Posterior vena cava (tissue), 2 donors: ENCODE measurements at regions of chrX and their contacts with region 1.

Region 1: GRCh38 chrX:132219343-132219768 is at the start of gene RAP2C:
- DNase-seq: peak; percentile 86
- total RNA-seq, gene RAP2C: 21.1 to 25.8 TPM

Region 2: DNA sequence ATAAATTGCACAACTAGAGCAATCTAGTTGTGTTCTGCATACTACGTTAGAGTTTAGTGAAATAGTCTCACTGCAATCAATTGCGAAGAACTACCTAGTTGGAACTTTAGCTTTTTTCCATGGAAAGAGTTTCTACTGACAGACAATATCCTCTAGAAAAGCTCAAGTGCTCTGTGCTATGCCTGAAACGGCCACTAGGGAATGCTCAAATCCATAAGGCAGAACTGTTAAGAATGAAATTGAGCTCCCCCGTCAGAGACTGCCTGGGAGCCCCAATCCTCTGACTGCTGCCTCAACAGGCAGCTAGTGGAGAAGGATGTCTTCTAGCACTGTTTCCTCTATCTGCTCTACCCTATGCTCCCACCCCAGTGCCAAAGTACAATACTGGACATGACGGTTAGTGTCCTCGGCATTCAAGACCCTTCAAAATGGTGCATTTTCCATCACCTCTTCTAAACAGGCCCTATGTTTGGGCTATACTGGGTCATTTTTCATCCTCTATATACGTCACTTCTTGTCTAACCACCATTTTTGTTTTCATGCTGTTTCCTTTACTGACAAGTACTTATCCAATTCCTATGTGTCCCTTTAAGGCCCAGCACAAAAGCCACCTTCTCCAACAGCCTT is 126.8 kb before region 1 on chrX:
- intact Hi-C with region 1: loop called in 1 of 2 experiments (anchors 10 kb)
- DNase-seq: no peak

Region 3: DNA sequence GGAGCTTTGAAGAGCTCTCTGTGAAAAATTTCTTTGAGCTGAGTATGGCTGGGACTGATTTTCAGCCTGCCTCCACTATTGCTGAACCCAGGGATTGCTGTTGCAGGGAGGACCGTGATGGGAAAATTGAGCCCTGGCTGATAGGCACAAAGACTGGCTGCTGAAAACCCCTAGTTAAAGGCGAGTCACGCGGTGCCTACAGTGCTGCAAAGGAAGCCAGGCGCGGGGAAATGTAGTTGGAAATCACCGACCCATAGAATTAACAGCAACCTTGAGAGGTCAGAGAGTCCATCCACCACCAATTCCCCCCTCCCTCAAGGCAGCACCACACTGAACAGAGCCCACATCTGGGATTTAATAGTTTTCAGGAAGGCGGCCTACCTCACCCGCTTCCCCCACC is 117.6 kb before region 1 on chrX:
- intact Hi-C with region 1: loop called (anchors 10 kb)
- DNase-seq: no peak

Region 4: DNA sequence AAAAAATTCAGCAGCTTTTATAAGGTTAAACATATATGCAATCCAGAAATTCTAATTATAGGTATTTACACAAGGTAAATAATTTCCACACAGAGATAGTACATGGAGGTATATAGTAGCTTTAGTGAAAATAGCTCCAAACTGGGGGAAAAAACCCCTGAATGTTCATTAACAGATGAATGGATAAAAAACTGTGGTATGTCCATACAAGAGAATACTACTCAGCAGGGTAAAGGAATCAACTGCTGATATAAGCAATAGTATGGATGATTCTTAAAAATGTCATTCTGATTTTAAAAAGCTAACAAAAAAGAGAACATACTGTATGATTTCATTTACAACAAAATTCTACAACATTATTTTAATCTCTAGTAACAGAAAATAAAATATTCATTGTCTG is 54.4 kb before region 1 on chrX:
- intact Hi-C with region 1: no loop called
- DNase-seq: no peak

Region 5: GRCh38 chrX:132257116-132257515 is 37.8 kb after region 1 on chrX:
- intact Hi-C with region 1: no loop called
- DNase-seq: no peak